H1 (cell line): ENCODE measurements at regions of chr15 and their contacts with region 1.

Region 1: DNA sequence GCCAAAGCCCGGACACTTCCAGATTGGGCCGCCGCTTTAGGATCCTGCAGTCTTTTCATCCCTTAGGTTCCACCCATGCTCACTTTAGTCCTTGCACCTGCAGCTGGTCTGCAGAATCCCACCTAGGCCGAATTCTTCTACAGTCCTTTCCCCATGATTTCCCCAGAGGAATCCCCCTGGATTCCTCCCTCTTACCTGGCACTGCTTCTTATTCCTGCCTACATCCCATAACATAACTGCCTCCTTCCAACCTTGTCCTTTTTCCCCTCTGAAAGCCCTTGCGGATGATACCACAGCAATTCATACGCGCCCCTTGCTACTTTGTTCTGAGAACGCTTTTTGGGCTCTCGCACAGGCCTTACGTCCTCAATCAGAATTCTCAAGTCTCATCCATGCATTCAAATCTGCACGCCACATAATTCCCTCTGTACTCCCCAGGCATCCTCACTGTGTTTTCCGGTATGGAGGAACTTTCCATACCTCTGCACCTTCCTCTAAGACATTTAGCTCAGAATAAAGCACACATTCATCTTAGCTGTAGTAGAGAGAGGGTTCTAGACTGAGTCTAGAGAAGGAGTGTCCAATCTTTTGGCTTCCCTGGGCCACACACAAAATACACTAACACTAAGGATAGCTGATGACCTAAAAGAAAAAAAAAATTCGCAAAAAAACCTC is 619 bp downstream of the EIF2AK4 start:
- DNase-seq: no peak
- H3K4me3 ChIP-seq: peak overlapping the region; percentile 62 to 91 (median 76)
- H3K27ac ChIP-seq: peak overlapping the region; percentile 70; the same call in 1 of the 2 replicates
- H3K4me1 ChIP-seq: peaks cover 0 to 8% (median 2%) of the 10 kb centered on the region in 4 experiments; a peak in 4 of 7 replicates
- H3K27me3 ChIP-seq: no peaks in the 10 kb centered on the region
- CTCF ChIP-seq: no peak
- EP300 ChIP-seq: no peak
- POLR2A ChIP-seq: peak in 1 of 2 experiments; percentile 59; a peak in 2 of 3 replicates
- RAD21 ChIP-seq: no peak

Region 2: GRCh38 chr15:39788108-39788507 is 146.4 kb before region 1 on chr15:
- CTCF ChIA-PET with region 1: interaction called, 23 read pairs
- POLR2A ChIA-PET with region 1: interaction called, 5 read pairs
- DNase-seq: no peak
- H3K4me3 ChIP-seq: no peak overlapping the region
- H3K27ac ChIP-seq: no peak overlapping the region
- H3K4me1 ChIP-seq: peaks cover 2 to 29% (median 24%) of the 10 kb centered on the region in 4 experiments; a peak in 6 of 7 replicates
- H3K27me3 ChIP-seq: no peaks in the 10 kb centered on the region
- CTCF ChIP-seq: no peak
- EP300 ChIP-seq: no peak
- POLR2A ChIP-seq: no peak
- RAD21 ChIP-seq: no peak

Region 3: GRCh38 chr15:39920510-39921273 is 13.8 kb before region 1 on chr15:
- CTCF ChIA-PET with region 1: interaction called, 7 read pairs
- POLR2A ChIA-PET with region 1: interaction called, 25 read pairs
- DNase-seq: peak in 1 of 2 experiments; percentile 86
- H3K4me3 ChIP-seq: peak overlapping the region; percentile 91 to 95 (median 94)
- H3K27ac ChIP-seq: peak overlapping the region; percentile 69
- H3K4me1 ChIP-seq: peaks cover 5 to 15% (median 8%) of the 10 kb centered on the region in 4 experiments; a peak in 6 of 7 replicates
- H3K27me3 ChIP-seq: no peaks in the 10 kb centered on the region
- CTCF ChIP-seq: peak in 2 of 3 experiments; percentile 23 to 29; a peak in 3 of 4 replicates
- EP300 ChIP-seq: no peak
- POLR2A ChIP-seq: peak; percentile 61 to 64
- RAD21 ChIP-seq: no peak; a peak in 1 of 4 replicates

Region 4: DNA sequence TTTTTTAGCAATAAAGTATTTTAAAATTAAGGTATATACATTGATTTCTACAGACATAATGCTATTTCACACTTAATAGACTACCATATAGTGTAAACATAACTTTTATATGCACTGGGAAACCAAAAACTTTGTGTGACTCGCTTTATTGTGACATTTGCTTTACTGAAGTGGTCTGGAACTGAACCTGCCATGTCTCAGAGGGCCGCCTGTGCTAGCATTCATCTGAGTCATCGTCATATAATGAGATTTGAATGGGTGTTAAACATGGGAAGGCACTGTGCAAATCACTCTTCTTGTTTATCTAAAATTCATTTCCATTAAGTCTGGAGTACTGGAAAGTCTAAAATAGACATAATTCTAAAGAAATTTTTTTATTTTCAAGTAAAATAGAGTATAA is 12.3 kb after region 1 on chr15:
- CTCF ChIA-PET with region 1: interaction called, 10 read pairs
- POLR2A ChIA-PET with region 1: interaction called, 7 read pairs
- DNase-seq: no peak
- H3K4me3 ChIP-seq: no peak overlapping the region
- H3K27ac ChIP-seq: no peak overlapping the region
- H3K4me1 ChIP-seq: peaks cover 0 to 5% (median 1%) of the 10 kb centered on the region in 4 experiments; a peak in 2 of 7 replicates
- H3K27me3 ChIP-seq: no peaks in the 10 kb centered on the region
- CTCF ChIP-seq: no peak
- EP300 ChIP-seq: no peak
- POLR2A ChIP-seq: no peak
- RAD21 ChIP-seq: no peak